ENCODE measurements at regions of chr6 and their contacts with region 1.

Region 1: DNA sequence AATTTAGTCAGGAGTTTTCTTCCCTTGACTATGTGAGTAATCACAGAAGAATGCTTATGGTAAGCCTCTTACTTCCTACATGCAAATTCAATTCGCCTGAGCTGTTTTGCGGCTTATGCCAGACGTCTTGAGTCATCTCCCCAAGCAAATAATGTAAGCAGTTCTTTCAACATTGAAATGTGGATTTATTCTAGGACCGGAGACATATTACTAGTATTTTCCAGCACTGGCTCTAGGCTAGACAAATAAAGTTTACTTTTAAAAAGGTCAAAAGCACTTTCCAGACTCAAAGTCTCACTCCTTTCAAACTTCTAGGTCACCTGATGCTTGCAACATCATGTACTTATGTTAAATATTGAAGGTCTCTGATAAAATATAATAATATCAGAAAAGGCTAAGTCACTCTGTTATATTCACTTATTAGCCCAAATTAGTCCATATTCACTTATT is 38.1 kb upstream of the NOX3 start:
- DNase-seq: peak; percentile 95
- H3K4me3 ChIP-seq: no peak overlapping the region
- H3K27ac ChIP-seq: peak overlapping the region; percentile 85
- H3K4me1 ChIP-seq: peaks cover 29% of the 10 kb centered on the region
- H3K27me3 ChIP-seq: no peaks in the 10 kb centered on the region
- CTCF ChIP-seq: no peak

Region 2: GRCh38 chr6:155223646-155224451 is 269.9 kb before region 1 on chr6:
- CTCF ChIA-PET with region 1: no interaction called
- dilution Hi-C with region 1: no loop called
- in situ Hi-C with region 1: no loop called
- intact Hi-C with region 1: no loop called
- DNase-seq: peak; percentile 97
- H3K4me3 ChIP-seq: no peak overlapping the region
- H3K27ac ChIP-seq: peak overlapping the region; percentile 61
- H3K4me1 ChIP-seq: peaks cover 33% of the 10 kb centered on the region
- H3K27me3 ChIP-seq: no peaks in the 10 kb centered on the region
- CTCF ChIP-seq: no peak

Region 3: GRCh38 chr6:155340464-155341129 is 153.1 kb before region 1 on chr6:
- CTCF ChIA-PET with region 1: no interaction called
- dilution Hi-C with region 1: no loop called
- in situ Hi-C with region 1: no loop called
- intact Hi-C with region 1: loop called (anchors 1 kb)
- DNase-seq: peak; percentile 56
- H3K4me3 ChIP-seq: no peak overlapping the region
- H3K27ac ChIP-seq: no peak overlapping the region
- H3K4me1 ChIP-seq: peaks cover 11% of the 10 kb centered on the region
- H3K27me3 ChIP-seq: no peaks in the 10 kb centered on the region
- CTCF ChIP-seq: peak; percentile 38 to 46

Region 4: DNA sequence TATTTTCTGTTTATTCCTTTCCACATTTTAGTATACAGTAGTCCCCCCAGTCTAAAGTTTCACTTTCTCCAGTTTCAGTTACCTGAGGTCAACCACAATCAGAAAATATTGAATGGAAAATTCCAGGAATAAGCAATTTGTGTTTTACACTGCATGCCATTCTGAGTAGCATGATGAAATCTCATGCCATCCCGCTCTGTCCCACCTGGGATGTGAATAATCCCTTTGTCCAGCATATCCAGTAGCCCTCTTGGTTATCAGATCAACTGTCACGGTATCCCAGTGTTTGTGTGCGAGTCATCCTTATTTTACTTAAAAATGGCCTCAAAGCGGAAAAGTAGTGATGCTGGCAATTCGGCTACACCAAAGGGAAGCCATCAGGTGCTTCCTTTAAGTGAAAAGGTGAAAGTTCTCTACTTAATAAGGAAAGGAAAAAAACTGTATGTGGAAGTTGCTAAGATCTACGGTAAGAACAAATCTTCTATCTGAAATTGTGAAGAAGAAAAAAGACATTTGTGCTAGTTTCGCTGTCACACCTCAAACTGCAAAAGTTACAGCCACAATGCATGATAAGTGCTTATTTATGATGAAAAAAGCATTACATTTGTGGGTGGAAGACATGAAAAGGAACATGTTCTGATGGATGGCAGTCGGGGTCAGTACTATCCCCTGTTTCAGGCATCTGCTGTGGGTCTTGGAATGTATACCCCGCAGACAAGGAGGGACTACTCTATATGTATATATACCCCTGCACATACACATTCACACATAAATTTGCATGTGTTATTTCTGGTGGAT is 49.4 kb before region 1 on chr6:
- CTCF ChIA-PET with region 1: no interaction called
- dilution Hi-C with region 1: no loop called
- in situ Hi-C with region 1: no loop called
- intact Hi-C with region 1: loop called (anchors 5 kb)
- DNase-seq: peak; percentile 85
- H3K4me3 ChIP-seq: no peak overlapping the region
- H3K27ac ChIP-seq: peak overlapping the region; percentile 39
- H3K4me1 ChIP-seq: peaks cover 7% of the 10 kb centered on the region
- H3K27me3 ChIP-seq: no peaks in the 10 kb centered on the region
- CTCF ChIP-seq: no peak

Region 5: GRCh38 chr6:155461556-155461955 is 32.2 kb before region 1 on chr6:
- CTCF ChIA-PET with region 1: no interaction called
- dilution Hi-C with region 1: no loop called
- in situ Hi-C with region 1: no loop called
- intact Hi-C with region 1: no loop called
- DNase-seq: no peak
- H3K4me3 ChIP-seq: no peak overlapping the region
- H3K27ac ChIP-seq: no peak overlapping the region
- H3K4me1 ChIP-seq: no peaks in the 10 kb centered on the region
- H3K27me3 ChIP-seq: no peaks in the 10 kb centered on the region
- CTCF ChIP-seq: no peak

Region 6: GRCh38 chr6:155530219-155530834 is 36.6 kb after region 1 on chr6:
- CTCF ChIA-PET with region 1: no interaction called
- dilution Hi-C with region 1: no loop called
- in situ Hi-C with region 1: no loop called
- intact Hi-C with region 1: loop called (anchors 2 kb)
- DNase-seq: peak; percentile 31
- H3K4me3 ChIP-seq: no peak overlapping the region
- H3K27ac ChIP-seq: no peak overlapping the region
- H3K4me1 ChIP-seq: peaks cover 12% of the 10 kb centered on the region
- H3K27me3 ChIP-seq: no peaks in the 10 kb centered on the region
- CTCF ChIP-seq: peak; percentile 79 to 81

Measured in mammary epithelial cell (primary cell).